Activated B cell treated with CpG ODN at 0.5 μM for 24 hours (primary cell): ENCODE measurements at regions of chr1 and their contacts with region 1.

Region 1: GRCh38 chr1:6784560-6785317 is 515 bp upstream of the CAMTA1 start:
- DNase-seq: peak; percentile 98
- ATAC-seq: peak; percentile 81
- H3K4me3 Mint-ChIP-seq: peak overlapping the region; percentile 90
- H3K27ac Mint-ChIP-seq: peak overlapping the region; percentile 89
- H3K4me1 Mint-ChIP-seq: peaks cover 51% of the 10 kb centered on the region
- H3K27me3 Mint-ChIP-seq: no peaks in the 10 kb centered on the region
- CTCF ChIP-seq: no peak

Region 2: GRCh38 chr1:6026095-6026809 is 758.5 kb before region 1 on chr1:
- CTCF ChIA-PET with region 1: no interaction called
- POLR2A ChIA-PET with region 1: interaction called, 4 read pairs
- intact Hi-C with region 1: loop called (anchors 5 kb)
- DNase-seq: peak; percentile 87
- ATAC-seq: peak; percentile 84
- H3K4me3 Mint-ChIP-seq: peak overlapping the region; percentile 86
- H3K27ac Mint-ChIP-seq: peak overlapping the region; percentile 90
- H3K4me1 Mint-ChIP-seq: peaks cover 71% of the 10 kb centered on the region
- H3K27me3 Mint-ChIP-seq: no peaks in the 10 kb centered on the region
- CTCF ChIP-seq: no peak

Region 3: GRCh38 chr1:6475381-6476133 is 309.2 kb before region 1 on chr1:
- CTCF ChIA-PET with region 1: no interaction called
- POLR2A ChIA-PET with region 1: no interaction called
- intact Hi-C with region 1: no loop called
- DNase-seq: peak; percentile 70
- ATAC-seq: peak; percentile 94
- H3K4me3 Mint-ChIP-seq: no peak overlapping the region
- H3K27ac Mint-ChIP-seq: no peak overlapping the region
- H3K4me1 Mint-ChIP-seq: no peaks in the 10 kb centered on the region
- H3K27me3 Mint-ChIP-seq: peaks cover 1% of the 10 kb centered on the region
- CTCF ChIP-seq: peak; percentile 63

Region 4: DNA sequence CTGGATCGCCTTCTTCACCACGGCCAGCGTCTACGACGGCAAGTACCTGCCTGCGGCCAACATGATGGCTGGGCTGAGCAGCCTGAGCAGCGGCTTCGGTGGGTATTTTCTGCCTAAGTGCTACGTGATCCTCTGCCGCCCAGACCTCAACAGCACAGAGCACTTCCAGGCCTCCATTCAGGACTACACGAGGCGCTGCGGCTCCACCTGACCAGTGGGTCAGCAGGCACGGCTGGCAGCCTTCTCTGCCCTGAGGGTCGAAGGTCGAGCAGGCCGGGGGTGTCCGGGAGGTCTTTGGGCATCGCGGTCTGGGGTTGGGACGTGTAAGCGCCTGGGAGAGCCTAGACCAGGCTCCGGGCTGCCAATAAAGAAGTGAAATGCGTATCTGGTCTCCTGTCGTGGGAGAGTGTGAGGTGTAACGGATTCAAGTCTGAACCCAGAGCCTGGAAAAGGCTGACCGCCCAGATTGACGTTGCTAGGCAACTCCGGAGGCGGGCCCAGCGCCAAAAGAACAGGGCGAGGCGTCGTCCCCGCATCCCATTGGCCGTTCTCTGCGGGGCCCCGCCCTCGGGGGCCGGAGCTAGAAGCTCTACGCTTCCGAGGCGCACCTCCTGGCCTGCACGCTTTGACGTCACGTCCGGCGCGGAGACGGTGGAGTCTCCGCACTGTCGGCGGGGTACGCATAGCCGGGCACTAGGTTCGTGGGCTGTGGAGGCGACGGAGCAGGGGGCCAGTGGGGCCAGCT is 205.2 kb before region 1 on chr1 and contains the start of gene ZBTB48:
- CTCF ChIA-PET with region 1: no interaction called
- POLR2A ChIA-PET with region 1: interaction called, 11 read pairs
- intact Hi-C with region 1: no loop called
- DNase-seq: peak; percentile 95
- ATAC-seq: peak; percentile 97
- H3K4me3 Mint-ChIP-seq: peak within 1 kb of the TSS; percentile 95
- H3K27ac Mint-ChIP-seq: peak within 1 kb of the TSS; percentile 94
- H3K4me1 Mint-ChIP-seq: peaks cover 37% of the 10 kb centered on the region
- H3K27me3 Mint-ChIP-seq: no peaks in the 10 kb centered on the region
- CTCF ChIP-seq: no peak
- total RNA-seq, gene ZBTB48: 53.2 and 53.8 TPM in 2 replicates

Region 5: DNA sequence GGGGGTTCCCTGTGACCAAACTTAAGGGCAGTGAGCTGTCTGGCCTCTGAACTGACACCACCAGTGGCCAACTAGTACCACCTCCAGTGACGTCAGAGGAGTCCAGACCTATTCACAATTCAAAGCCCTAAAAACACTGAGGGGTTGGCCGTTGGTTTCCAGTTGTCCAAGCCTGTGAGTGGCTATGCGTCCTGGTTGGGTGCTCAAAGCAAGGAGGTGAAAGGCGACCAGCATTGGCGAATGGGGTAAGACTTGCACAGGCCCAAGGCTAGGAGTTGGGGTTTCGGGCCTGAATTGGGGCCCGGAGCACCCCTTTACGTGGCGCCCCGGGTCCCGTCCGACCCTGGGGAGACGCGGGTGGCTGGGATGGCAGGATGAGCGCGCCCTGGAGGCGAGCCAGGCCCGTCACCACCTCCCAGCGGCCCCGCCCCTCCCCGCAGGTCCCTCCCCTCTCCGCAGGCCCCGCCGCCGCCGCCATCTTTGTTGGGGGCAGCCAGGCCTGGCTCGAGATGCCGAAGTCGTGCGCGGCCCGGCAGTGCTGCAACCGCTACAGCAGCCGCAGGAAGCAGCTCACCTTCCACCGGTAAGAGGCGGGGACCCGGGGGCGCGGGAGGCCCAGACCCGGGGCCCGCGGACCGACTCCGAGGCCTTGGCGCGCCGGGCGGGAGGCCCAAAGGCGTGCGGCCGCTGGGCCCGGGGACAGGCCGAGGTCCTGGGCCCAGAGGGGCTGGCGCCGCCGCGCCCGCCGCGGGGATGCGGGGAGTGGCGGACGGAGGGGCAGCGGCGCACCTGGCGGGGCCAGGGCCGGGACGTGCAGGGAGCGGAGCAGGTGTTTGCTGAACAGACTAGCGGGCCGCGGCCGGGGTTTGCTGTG is 159.8 kb before region 1 on chr1 and contains the start of gene THAP3:
- CTCF ChIA-PET with region 1: no interaction called
- POLR2A ChIA-PET with region 1: interaction called, 4 read pairs
- intact Hi-C with region 1: loop called (anchors 2 kb)
- DNase-seq: peak; percentile 83
- ATAC-seq: peak; percentile 97
- H3K4me3 Mint-ChIP-seq: peak within 1 kb of the TSS; percentile 86
- H3K27ac Mint-ChIP-seq: peak within 1 kb of the TSS; percentile 71
- H3K4me1 Mint-ChIP-seq: peaks cover 32% of the 10 kb centered on the region
- H3K27me3 Mint-ChIP-seq: no peaks in the 10 kb centered on the region
- CTCF ChIP-seq: no peak
- total RNA-seq, gene THAP3: 16.2 and 21.3 TPM in 2 replicates

Region 6: GRCh38 chr1:6727535-6727934 is 57.2 kb before region 1 on chr1:
- CTCF ChIA-PET with region 1: no interaction called
- POLR2A ChIA-PET with region 1: no interaction called
- intact Hi-C with region 1: loop called (anchors 2 kb)
- DNase-seq: peak; percentile 44
- ATAC-seq: peak; percentile 47
- H3K4me3 Mint-ChIP-seq: no peak overlapping the region
- H3K27ac Mint-ChIP-seq: no peak overlapping the region
- H3K4me1 Mint-ChIP-seq: no peaks in the 10 kb centered on the region
- H3K27me3 Mint-ChIP-seq: peaks cover 3% of the 10 kb centered on the region
- CTCF ChIP-seq: peak; percentile 64

Region 7: GRCh38 chr1:6770751-6771440 is 13.8 kb before region 1 on chr1:
- CTCF ChIA-PET with region 1: no interaction called
- POLR2A ChIA-PET with region 1: interaction called, 36 read pairs
- intact Hi-C with region 1: loop called (anchors 2 kb)
- DNase-seq: no peak
- ATAC-seq: peak; percentile 83
- H3K4me3 Mint-ChIP-seq: peak overlapping the region; percentile 4
- H3K27ac Mint-ChIP-seq: no peak overlapping the region
- H3K4me1 Mint-ChIP-seq: peaks cover 33% of the 10 kb centered on the region
- H3K27me3 Mint-ChIP-seq: no peaks in the 10 kb centered on the region
- CTCF ChIP-seq: no peak

Region 8: GRCh38 chr1:6822530-6823359 is 38.0 kb after region 1 on chr1:
- CTCF ChIA-PET with region 1: no interaction called
- POLR2A ChIA-PET with region 1: no interaction called
- intact Hi-C with region 1: no loop called
- DNase-seq: no peak
- ATAC-seq: no peak
- H3K4me3 Mint-ChIP-seq: peak overlapping the region; percentile 5
- H3K27ac Mint-ChIP-seq: no peak overlapping the region
- H3K4me1 Mint-ChIP-seq: peaks cover 49% of the 10 kb centered on the region
- H3K27me3 Mint-ChIP-seq: no peaks in the 10 kb centered on the region
- CTCF ChIP-seq: no peak